AG04449 (cell line): ENCODE measurements at regions of chr19 and their contacts with region 1.

Region 1: DNA sequence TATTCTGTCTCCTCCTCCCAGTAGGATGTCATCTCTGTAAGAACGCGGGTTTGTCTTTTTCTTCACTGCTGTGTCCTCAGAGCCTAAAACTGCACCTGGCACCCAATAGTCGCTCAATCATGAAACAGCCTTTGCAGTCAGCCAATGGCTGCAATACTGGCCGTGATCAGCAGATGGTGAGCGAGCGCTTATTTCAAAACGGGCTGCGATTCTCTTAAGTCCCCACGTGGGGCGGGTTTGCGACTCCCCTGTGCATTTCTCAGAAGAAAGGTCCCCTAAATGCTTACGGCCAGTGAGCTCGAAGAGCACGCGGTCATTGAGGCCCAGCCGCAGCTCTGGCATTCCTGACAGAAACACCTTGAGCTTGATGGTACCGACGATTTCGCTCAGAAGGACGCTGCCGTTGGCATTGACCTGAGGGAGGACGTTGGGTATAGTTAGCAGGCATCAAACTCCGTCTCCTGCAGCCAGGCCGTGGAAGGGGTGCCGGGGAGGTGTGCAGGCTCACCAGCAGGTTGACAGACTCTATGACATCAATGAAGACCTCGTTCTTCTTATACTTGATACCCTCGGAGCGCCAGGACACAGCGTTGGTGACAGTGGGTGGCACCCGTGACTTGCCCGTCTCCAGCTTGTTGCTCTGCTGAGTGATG is 6.0 kb downstream of the AP1M2 start:
- DNase-seq: peak; percentile 44
- H3K4me3 ChIP-seq: peak overlapping the region; percentile 25; the same call in 1 of the 2 replicates
- CTCF ChIP-seq: peak; percentile 94

Region 2: GRCh38 chr19:10543420-10544241 is 37.5 kb before region 1 on chr19 and contains the start of gene ATG4D:
- CTCF ChIA-PET with region 1: no interaction called
- POLR2A ChIA-PET with region 1: no interaction called
- DNase-seq: no peak
- H3K4me3 ChIP-seq: peak within 1 kb of the TSS; percentile 71
- CTCF ChIP-seq: no peak

Region 3: DNA sequence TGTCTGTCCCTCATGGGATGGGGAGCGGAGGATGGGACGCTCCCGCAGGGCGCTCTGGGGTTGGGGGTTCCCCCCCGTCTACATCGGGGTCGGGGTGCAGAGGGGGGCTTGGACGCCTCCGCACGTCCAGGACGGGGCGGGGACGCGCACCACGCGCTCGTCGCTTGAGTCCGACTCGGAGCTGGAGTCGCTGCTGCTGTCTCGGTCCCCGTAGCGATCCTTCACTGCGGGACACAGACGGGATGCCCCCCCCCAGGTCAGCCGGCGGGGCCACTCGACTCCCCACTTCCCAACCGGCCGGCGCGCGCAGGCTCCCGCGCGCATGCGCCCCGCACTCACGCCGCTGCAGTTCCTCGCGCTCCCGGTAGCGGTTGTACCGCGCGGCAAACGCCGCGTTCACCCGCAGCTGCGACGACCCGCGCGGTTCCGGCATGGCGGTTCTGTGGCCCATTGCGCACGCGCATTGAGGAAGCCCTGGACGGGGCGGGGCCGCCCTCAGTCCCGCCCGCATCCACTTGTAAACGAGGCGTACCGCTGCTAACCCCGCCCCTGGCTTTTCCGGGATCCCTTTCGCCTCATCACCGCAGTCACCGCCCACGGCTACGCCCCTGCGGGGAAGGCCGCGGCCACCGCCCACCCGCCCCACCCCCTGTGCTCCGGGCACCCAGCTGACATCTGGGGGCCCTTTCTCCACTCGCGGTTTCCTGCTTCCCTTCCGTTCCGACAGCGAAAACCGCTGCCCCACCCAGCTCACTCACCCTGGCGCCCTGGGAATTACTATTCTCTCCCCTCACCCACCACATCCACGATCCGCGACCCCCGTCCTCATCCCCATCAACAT is 15.3 kb before region 1 on chr19 and contains the start of gene KRI1:
- CTCF ChIA-PET with region 1: interaction called, 74 read pairs
- POLR2A ChIA-PET with region 1: no interaction called
- DNase-seq: peak; percentile 67
- H3K4me3 ChIP-seq: peak within 1 kb of the TSS; percentile 98
- CTCF ChIP-seq: peak; percentile 53

Region 4: GRCh38 chr19:10602330-10603083 is 21.4 kb after region 1 on chr19:
- CTCF ChIA-PET with region 1: interaction called, 19 read pairs
- POLR2A ChIA-PET with region 1: no interaction called
- DNase-seq: no peak
- H3K4me3 ChIP-seq: peak overlapping the region; percentile 96
- CTCF ChIP-seq: no peak

Region 5: DNA sequence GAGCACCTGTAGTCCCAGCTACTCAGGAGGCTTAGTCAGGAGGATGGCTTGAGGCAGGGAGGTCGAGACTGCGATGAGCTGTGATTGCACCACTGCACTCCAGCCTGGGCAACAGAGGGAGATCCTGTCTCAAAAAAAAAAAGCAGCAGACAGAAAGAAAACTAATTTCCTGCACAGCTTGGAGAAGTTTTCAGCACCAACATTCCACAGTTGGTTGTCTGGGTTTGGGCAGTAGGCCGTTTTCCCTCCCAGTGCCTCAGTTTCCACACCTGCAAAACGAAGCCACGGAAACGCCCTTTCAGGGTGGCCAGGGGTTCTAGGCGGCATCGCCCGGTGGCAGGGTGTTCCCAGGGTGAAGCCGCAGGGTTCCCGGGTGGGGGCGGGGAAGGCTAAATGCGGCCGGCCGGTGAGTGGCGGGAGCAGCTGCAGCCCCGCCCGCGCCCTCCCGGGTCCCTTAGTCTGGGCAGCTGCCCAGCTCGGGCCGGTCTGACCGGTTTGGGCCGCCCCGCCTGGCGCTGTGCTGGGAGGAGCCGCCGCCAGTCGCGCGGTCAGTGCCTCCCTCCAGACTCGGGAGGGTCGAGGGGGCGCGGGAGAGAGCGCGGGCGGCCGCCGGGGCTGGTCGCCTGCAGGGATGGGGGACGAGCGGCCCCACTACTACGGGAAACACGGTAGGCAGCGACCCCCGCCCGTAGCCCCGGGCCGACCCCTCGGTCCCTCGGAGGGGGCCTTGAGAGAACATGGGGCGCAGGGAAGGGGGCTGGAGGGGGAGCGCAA is 44.1 kb after region 1 on chr19 and contains the start of gene SLC44A2:
- CTCF ChIA-PET with region 1: interaction called, 41 read pairs
- POLR2A ChIA-PET with region 1: no interaction called
- DNase-seq: no peak
- H3K4me3 ChIP-seq: peak within 1 kb of the TSS; percentile 60
- CTCF ChIP-seq: no peak

Region 6: GRCh38 chr19:10653715-10654492 is 72.8 kb after region 1 on chr19 and contains the start of gene ILF3:
- CTCF ChIA-PET with region 1: interaction called, 644 read pairs
- POLR2A ChIA-PET with region 1: no interaction called
- DNase-seq: peak; percentile 100
- H3K4me3 ChIP-seq: peak within 1 kb of the TSS; percentile 97
- CTCF ChIP-seq: no peak

Region 7: GRCh38 chr19:10677751-10678150 is 96.6 kb after region 1 on chr19:
- CTCF ChIA-PET with region 1: interaction called, 24 read pairs
- POLR2A ChIA-PET with region 1: no interaction called
- DNase-seq: no peak
- H3K4me3 ChIP-seq: no peak overlapping the region
- CTCF ChIP-seq: no peak